Activated CD4-positive, alpha-beta T cell treated with anti-CD3 and anti-CD28 coated beads, Interleukin-2, amount 10 ng/mL, durations not matched to agents 24 days and 14 days (primary cell): ENCODE measurements at regions of chr6 and their contacts with region 1.

Region 1: GRCh38 chr6:29964887-29965562 is 22.7 kb downstream of the HLA-A start:
- DNase-seq: peak; percentile 93
- H3K4me3 Mint-ChIP-seq: peak overlapping the region; percentile 94
- H3K27ac Mint-ChIP-seq: peak overlapping the region; percentile 97
- H3K4me1 Mint-ChIP-seq: peaks cover 42% of the 10 kb centered on the region
- H3K27me3 Mint-ChIP-seq: peaks cover 3% of the 10 kb centered on the region

Region 2: GRCh38 chr6:29752451-29753308 is 212.3 kb before region 1 on chr6:
- intact Hi-C with region 1: loop called (anchors 1 kb)
- DNase-seq: peak; percentile 95
- H3K4me3 Mint-ChIP-seq: peak overlapping the region; percentile 86
- H3K27ac Mint-ChIP-seq: peak overlapping the region; percentile 95
- H3K4me1 Mint-ChIP-seq: peaks cover 52% of the 10 kb centered on the region
- H3K27me3 Mint-ChIP-seq: no peaks in the 10 kb centered on the region

Region 3: DNA sequence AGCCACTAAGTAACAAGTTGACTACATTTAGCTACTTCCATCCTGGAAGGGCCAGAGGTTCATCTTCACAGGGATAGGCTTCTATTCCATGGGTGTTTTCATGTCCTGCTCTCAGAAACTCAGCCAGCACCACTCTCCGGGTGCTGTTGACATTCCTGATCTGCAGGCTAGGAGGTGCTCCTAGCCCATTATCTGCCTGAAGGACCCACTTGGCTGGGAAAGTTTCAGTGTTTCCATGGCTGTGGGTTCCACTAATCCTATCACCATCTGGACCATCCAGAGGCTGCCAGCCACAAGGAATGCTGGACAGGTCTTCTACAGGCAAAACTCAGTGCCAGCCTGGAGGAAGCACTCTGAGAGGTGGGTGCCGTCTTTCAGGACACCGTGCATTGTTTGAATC is 92.2 kb before region 1 on chr6:
- intact Hi-C with region 1: no loop called
- DNase-seq: no peak
- H3K4me3 Mint-ChIP-seq: no peak overlapping the region
- H3K27ac Mint-ChIP-seq: no peak overlapping the region
- H3K4me1 Mint-ChIP-seq: no peaks in the 10 kb centered on the region
- H3K27me3 Mint-ChIP-seq: peaks cover 17% of the 10 kb centered on the region

Region 4: GRCh38 chr6:29926413-29927274 is 38.4 kb before region 1 on chr6:
- intact Hi-C with region 1: loop called (anchors 2 kb)
- DNase-seq: peak; percentile 94
- H3K4me3 Mint-ChIP-seq: peak overlapping the region; percentile 88
- H3K27ac Mint-ChIP-seq: peak overlapping the region; percentile 94
- H3K4me1 Mint-ChIP-seq: peaks cover 28% of the 10 kb centered on the region
- H3K27me3 Mint-ChIP-seq: peaks cover 1% of the 10 kb centered on the region

Region 5: DNA sequence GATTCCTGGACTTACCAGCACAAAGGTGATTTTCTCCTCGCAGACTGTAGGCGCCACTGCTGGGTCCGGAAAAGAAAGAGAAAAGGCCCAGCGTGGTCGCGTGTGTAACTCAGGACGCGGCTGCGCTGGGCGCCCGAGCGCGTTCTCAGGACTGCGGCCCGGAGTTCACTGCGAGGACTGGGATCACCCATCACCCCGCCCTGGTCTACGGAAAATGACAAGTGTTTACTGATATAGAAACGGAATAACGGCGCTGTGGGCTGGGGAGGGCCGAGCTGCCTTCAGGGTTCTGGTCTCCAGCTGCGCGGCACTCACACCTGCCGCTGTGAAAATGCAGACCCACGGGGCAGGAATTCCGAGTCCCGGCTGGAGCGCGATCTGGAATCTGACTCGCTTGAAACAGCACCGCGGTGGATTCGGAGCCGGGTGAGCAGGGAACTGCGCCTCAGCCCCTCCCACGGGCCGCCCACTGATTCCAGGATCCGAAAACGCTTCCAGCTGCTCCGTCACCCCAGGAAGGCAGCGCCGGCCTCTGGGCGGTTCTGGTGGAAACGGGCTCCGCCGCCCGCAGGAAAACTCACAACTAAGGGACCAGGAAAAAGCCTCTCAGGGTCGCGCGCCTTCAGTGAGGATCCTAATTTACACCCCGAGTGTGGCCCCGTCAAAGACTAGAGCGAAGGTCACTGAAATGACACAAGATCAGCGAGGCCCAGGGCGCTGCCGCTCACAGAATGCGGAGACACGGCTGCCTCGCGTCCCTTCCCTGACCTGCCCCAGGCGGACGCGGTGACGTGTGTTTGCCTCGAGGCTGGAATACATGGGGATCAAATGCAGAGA is 11.8 kb after region 1 on chr6:
- intact Hi-C with region 1: loop called (anchors 1 kb)
- DNase-seq: peak; percentile 88
- H3K4me3 Mint-ChIP-seq: peak overlapping the region; percentile 82
- H3K27ac Mint-ChIP-seq: peak overlapping the region; percentile 63
- H3K4me1 Mint-ChIP-seq: peaks cover 34% of the 10 kb centered on the region
- H3K27me3 Mint-ChIP-seq: peaks cover 62% of the 10 kb centered on the region

Region 6: GRCh38 chr6:30044630-30045029 is 79.6 kb after region 1 on chr6:
- intact Hi-C with region 1: no loop called
- DNase-seq: no peak
- H3K4me3 Mint-ChIP-seq: no peak overlapping the region
- H3K27ac Mint-ChIP-seq: no peak overlapping the region
- H3K4me1 Mint-ChIP-seq: peaks cover 22% of the 10 kb centered on the region
- H3K27me3 Mint-ChIP-seq: no peaks in the 10 kb centered on the region

Region 7: DNA sequence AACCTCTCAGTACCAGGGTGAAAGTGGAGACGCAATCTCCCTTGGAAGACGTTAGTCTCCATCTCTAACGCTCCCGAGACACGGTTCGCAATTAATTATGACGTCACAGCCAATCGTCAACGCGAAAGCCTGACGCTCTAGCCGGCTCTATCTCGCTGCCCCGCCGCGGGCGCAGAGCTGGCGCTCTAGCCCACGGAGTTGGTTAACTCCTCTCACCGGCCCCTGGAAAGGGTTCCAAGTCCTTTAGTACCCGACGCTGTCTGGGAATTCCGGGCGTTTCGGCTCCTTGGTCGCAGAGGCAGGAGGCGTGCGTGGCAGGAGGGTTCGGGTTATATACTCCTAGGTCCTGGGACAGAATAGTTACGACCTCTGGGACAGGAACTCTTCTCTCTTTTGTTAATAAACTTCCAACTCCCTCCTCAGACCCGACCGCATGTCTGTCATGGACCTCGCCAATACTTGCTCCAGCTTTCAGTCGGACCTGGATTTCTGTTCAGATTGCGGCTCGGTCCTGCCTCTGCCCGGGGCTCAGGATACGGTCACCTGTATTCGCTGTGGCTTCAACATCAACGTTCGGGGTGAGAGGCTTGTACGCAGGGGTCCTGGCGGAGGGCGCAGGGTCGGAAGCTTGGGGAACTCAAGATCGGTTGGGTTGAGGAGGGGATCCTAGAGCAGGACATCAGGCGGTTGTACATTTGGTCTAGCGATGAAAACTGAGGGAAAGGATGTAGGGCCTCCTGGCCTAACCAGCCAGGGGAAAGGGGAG is 96.2 kb after region 1 on chr6 and contains the start of gene POLR1H:
- intact Hi-C with region 1: loop called (anchors 5 kb)
- DNase-seq: peak; percentile 96
- H3K4me3 Mint-ChIP-seq: peak within 1 kb of the TSS; percentile 97
- H3K27ac Mint-ChIP-seq: peak within 1 kb of the TSS; percentile 99
- H3K4me1 Mint-ChIP-seq: peaks cover 27% of the 10 kb centered on the region
- H3K27me3 Mint-ChIP-seq: no peaks in the 10 kb centered on the region
- total RNA-seq, gene POLR1H: 85.6 and 87.0 TPM in 2 replicates